ENCODE measurements at regions of chr1 and their contacts with region 1.

Region 1: DNA sequence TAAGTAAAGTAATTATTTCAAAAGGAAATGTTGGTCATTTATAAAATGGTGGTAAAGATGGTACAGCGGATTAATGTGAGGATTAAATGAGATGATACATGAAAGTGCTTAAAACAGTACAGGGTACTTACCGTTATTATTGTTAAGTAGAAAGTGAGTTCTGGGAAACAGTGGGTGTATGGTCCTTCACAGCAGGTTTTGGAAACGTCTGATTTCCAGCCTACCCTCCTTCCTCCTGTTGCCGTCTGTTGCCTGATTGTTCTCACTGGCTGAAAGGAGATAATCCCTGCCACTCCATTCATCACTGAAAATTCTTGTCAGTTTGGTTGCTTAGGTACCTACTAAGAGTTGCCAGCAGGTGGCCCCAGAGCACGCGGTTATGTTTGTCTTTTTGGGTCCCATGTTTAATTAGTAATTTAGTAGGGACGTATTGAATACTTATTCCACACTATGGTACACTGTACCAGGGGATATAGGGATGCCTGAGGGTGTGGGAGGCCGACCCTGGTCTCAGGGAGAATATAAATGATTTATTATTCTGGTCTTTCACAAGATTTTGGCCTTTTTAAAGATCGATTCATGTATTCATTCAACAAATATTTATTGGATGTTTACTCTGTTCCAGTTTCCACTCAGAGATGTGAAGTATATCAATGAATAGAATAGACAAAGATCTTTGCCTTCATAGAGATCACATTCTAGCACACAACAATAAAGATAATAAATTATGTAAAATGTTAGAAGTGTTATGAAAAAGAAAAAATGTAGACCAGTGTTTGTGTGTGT is 30.8 kb upstream of the RPTN start:
- DNase-seq: peak in 1 of 2 donors; percentile 62
- H3K4me3 ChIP-seq: peak overlapping the region; percentile 16
- CTCF ChIP-seq: no peak
- POLR2A ChIP-seq: no peak

Region 2: DNA sequence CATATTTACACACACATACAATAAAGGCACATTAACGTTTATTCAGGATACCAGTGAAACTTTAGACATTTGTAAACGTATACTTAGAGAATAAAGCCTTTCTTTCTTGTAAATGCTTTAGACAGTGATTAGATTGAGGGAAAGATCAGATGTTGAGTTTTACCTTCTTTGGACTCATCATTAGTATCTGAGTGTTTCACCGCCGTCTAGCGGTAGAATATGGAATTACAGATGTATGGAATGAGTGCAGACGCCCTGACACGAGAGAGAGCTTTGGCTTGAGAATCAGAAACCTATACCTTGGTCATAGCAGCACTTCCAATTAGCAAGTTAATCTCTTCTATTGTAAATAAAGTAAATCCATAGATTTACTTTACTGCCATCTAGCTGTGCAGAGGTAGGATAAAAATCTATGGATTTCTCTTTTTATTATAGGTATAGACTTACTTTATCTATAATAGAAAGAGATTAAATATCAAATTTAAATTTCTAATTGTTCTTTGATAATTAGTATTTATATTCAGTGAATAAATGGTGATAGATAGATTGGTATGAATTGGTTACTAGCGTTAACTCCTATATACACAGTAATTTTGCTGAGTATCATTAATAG is 157.4 kb after region 1 on chr1:
- intact Hi-C with region 1: loop called (anchors 10 kb)
- DNase-seq: peak in 1 of 2 donors; percentile 61
- H3K4me3 ChIP-seq: no peak overlapping the region
- CTCF ChIP-seq: peak in 1 of 3 donors; percentile 66
- POLR2A ChIP-seq: no peak

Region 3: GRCh38 chr1:152459596-152460528 is 270.0 kb after region 1 on chr1:
- intact Hi-C with region 1: loop called (anchors 5 kb)
- DNase-seq: peak in 1 of 2 donors; percentile 92
- H3K4me3 ChIP-seq: no peak overlapping the region
- CTCF ChIP-seq: peak in 1 of 3 donors; percentile 26
- POLR2A ChIP-seq: no peak